ENCODE measurements at regions of chrX and their contacts with region 1.

Region 1: GRCh38 chrX:109886122-109886761 is 116.7 kb upstream of the TMEM164 start:
- DNase-seq: peak in 3 of 5 donors; percentile 37 to 44 (median 40)
- H3K4me3 ChIP-seq: no peak overlapping the region
- H3K27ac ChIP-seq: no peak overlapping the region
- H3K4me1 ChIP-seq: no peaks in the 10 kb centered on the region
- H3K27me3 ChIP-seq: no peaks in the 10 kb centered on the region
- CTCF ChIP-seq: peak; percentile 65

Region 2: GRCh38 chrX:109360291-109360690 is 526.0 kb before region 1 on chrX:
- intact Hi-C with region 1: no loop called
- DNase-seq: no peak
- H3K4me3 ChIP-seq: no peak overlapping the region
- H3K27ac ChIP-seq: no peak overlapping the region
- H3K4me1 ChIP-seq: no peaks in the 10 kb centered on the region
- H3K27me3 ChIP-seq: no peaks in the 10 kb centered on the region
- CTCF ChIP-seq: no peak

Region 3: GRCh38 chrX:109485470-109486340 is 400.5 kb before region 1 on chrX:
- intact Hi-C with region 1: loop called (anchors 10 kb)
- DNase-seq: peak in 4 of 5 donors; percentile 54 to 78 (median 72)
- H3K4me3 ChIP-seq: no peak overlapping the region
- H3K27ac ChIP-seq: no peak overlapping the region
- H3K4me1 ChIP-seq: no peaks in the 10 kb centered on the region
- H3K27me3 ChIP-seq: no peaks in the 10 kb centered on the region
- CTCF ChIP-seq: peak; percentile 94

Measured in kidney (tissue), 22 donors.